Breast epithelium (tissue), 4 donors: ENCODE measurements at regions of chr4 and their contacts with region 1.

Region 1: GRCh38 chr4:749698-750666 is 44.4 kb downstream of the PCGF3 start:
- DNase-seq: no peak
- H3K4me3 ChIP-seq: no peak overlapping the region
- H3K27ac ChIP-seq: no peak overlapping the region
- H3K4me1 ChIP-seq: no peaks in the 10 kb centered on the region
- H3K27me3 ChIP-seq: no peaks in the 10 kb centered on the region
- CTCF ChIP-seq: no peak
- POLR2A ChIP-seq: no peak

Region 2: GRCh38 chr4:762211-763190 is 12.5 kb after region 1 on chr4:
- intact Hi-C with region 1: no loop called
- DNase-seq: no peak
- H3K4me3 ChIP-seq: no peak overlapping the region
- H3K27ac ChIP-seq: no peak overlapping the region
- H3K4me1 ChIP-seq: no peaks in the 10 kb centered on the region
- H3K27me3 ChIP-seq: no peaks in the 10 kb centered on the region
- CTCF ChIP-seq: peak in 2 of 3 donors; percentile 19 to 47
- POLR2A ChIP-seq: no peak

Region 3: GRCh38 chr4:1218634-1219565 is 468.9 kb after region 1 on chr4:
- intact Hi-C with region 1: loop called (anchors 10 kb)
- DNase-seq: no peak
- H3K4me3 ChIP-seq: no peak overlapping the region
- H3K27ac ChIP-seq: no peak overlapping the region
- H3K4me1 ChIP-seq: no peaks in the 10 kb centered on the region
- H3K27me3 ChIP-seq: no peaks in the 10 kb centered on the region
- CTCF ChIP-seq: no peak
- POLR2A ChIP-seq: no peak